Calu3 (cell line): ENCODE measurements at regions of chr12 and their contacts with region 1.

Region 1: GRCh38 chr12:89352492-89353187 is at the start of gene DUSP6:
- DNase-seq: peak; percentile 97
- H3K4me3 Mint-ChIP-seq: peak within 1 kb of the TSS; percentile 90
- H3K27ac Mint-ChIP-seq: peak within 1 kb of the TSS; percentile 97
- H3K4me1 Mint-ChIP-seq: peaks cover 42% of the 10 kb centered on the region
- H3K27me3 Mint-ChIP-seq: no peaks in the 10 kb centered on the region
- CTCF ChIP-seq: no peak
- total RNA-seq, gene DUSP6: 108 TPM in 2 replicates

Region 2: DNA sequence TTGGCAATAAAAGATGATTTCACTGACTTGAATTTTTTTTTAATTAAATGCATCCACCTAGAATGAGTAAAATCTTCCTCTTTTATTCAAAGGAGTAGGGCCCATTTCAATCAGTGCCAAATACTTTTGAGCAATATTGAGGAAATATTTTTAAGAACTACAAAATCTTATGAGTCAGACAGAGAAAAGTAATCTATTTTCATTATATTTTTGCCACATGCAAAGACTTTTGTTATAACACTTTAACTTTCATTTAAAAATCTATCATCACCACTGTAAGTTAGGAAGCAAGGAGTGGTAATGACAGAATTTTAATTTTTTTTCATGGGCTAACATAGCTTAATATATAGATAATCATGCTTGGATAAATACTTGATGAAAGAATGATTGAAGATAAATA is 427.2 kb before region 1 on chr12:
- CTCF ChIA-PET with region 1: no interaction called
- intact Hi-C with region 1: loop called (anchors 5 kb)
- DNase-seq: no peak
- H3K4me3 Mint-ChIP-seq: peak overlapping the region; percentile 18
- H3K27ac Mint-ChIP-seq: peak overlapping the region; percentile 83
- H3K4me1 Mint-ChIP-seq: peaks cover 63% of the 10 kb centered on the region
- H3K27me3 Mint-ChIP-seq: no peaks in the 10 kb centered on the region
- CTCF ChIP-seq: no peak

Region 3: GRCh38 chr12:89051065-89051677 is 301.5 kb before region 1 on chr12:
- CTCF ChIA-PET with region 1: no interaction called
- intact Hi-C with region 1: loop called (anchors 2 kb)
- DNase-seq: peak; percentile 52
- H3K4me3 Mint-ChIP-seq: no peak overlapping the region
- H3K27ac Mint-ChIP-seq: no peak overlapping the region
- H3K4me1 Mint-ChIP-seq: no peaks in the 10 kb centered on the region
- H3K27me3 Mint-ChIP-seq: no peaks in the 10 kb centered on the region
- CTCF ChIP-seq: peak; percentile 79

Region 4: GRCh38 chr12:89117448-89118034 is 235.1 kb before region 1 on chr12:
- CTCF ChIA-PET with region 1: interaction called, 3 read pairs
- intact Hi-C with region 1: loop called (anchors 1 kb)
- DNase-seq: peak; percentile 88
- H3K4me3 Mint-ChIP-seq: peak overlapping the region; percentile 41
- H3K27ac Mint-ChIP-seq: peak overlapping the region; percentile 87
- H3K4me1 Mint-ChIP-seq: peaks cover 27% of the 10 kb centered on the region
- H3K27me3 Mint-ChIP-seq: no peaks in the 10 kb centered on the region
- CTCF ChIP-seq: no peak

Region 5: GRCh38 chr12:89461649-89462612 is 109.3 kb after region 1 on chr12:
- CTCF ChIA-PET with region 1: interaction called, 4 read pairs
- intact Hi-C with region 1: loop called (anchors 1 kb)
- DNase-seq: no peak
- H3K4me3 Mint-ChIP-seq: no peak overlapping the region
- H3K27ac Mint-ChIP-seq: no peak overlapping the region
- H3K4me1 Mint-ChIP-seq: peaks cover 29% of the 10 kb centered on the region
- H3K27me3 Mint-ChIP-seq: no peaks in the 10 kb centered on the region
- CTCF ChIP-seq: peak; percentile 32

Region 6: GRCh38 chr12:89524541-89525285 is 172.1 kb after region 1 on chr12 and contains the start of gene GALNT4:
- CTCF ChIA-PET with region 1: interaction called, 4 read pairs
- intact Hi-C with region 1: loop called (anchors 2 kb)
- DNase-seq: peak; percentile 94
- H3K4me3 Mint-ChIP-seq: peak within 1 kb of the TSS; percentile 98
- H3K27ac Mint-ChIP-seq: peak within 1 kb of the TSS; percentile 94
- H3K4me1 Mint-ChIP-seq: peaks cover 34% of the 10 kb centered on the region
- H3K27me3 Mint-ChIP-seq: no peaks in the 10 kb centered on the region
- CTCF ChIP-seq: peak; percentile 85
- total RNA-seq, gene GALNT4: 67.0 and 70.9 TPM in 2 replicates